PC-3 (cell line): ENCODE measurements at regions of chr20 and their contacts with region 1.

Region 1: GRCh38 chr20:48945851-48946514 is 24.5 kb downstream of the ARFGEF2 start:
- DNase-seq: peak; percentile 99
- ATAC-seq: peak; percentile 98
- H3K4me3 ChIP-seq: peak overlapping the region; percentile 58
- H3K27ac ChIP-seq: peak overlapping the region; percentile 87
- H3K4me1 ChIP-seq: peaks cover 20% of the 10 kb centered on the region
- H3K27me3 ChIP-seq: no peaks in the 10 kb centered on the region
- CTCF ChIP-seq: no peak

Region 2: DNA sequence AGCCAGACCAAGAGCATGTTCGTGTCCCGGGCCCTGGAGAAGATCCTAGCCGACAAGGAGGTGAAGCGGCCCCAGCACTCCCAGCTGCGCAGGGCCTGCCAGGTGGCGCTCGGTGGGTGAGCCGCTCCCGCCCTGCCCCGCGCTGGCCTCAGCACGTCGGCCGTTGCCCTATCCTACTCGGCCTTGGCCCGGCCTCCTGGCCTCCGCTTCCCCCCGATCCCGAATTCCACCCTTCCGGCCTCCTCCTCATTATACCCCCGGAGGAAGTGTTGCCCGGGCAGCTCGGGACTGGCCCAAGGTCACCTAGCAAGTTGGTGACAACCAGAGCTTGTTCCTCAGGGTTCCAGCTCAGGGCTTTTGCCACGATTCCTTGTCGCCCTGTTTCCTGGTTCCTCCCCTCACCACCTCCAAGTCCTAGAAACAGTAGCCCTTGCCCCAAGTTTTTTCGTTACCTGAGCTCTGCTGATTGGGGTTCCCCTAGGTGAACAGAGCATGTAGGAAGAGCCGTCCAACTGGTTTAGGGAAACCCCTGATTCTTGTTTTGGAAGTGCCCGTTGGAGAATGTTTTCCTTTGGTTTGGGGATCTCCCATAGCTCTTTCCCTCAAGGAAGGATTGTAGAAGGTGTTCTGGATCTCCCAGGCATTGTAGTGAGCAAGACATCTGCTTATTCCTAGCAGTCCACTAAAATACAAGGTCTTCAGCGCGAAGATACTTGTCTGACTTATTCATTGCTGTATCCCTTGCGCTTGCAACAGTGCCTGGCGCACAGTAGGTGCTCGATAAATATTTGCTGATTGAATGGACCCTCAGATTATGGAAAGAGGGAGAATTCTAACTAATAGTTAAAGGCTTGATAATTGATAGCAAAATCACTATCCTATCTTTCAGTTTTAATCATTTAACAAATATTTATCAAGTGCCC is 23.8 kb before region 1 on chr20:
- CTCF ChIA-PET with region 1: no interaction called
- POLR2A ChIA-PET with region 1: no interaction called
- intact Hi-C with region 1: loop called (anchors 2 kb)
- DNase-seq: peak; percentile 49
- ATAC-seq: peak; percentile 73
- H3K4me3 ChIP-seq: peak overlapping the region; percentile 89
- H3K27ac ChIP-seq: peak overlapping the region; percentile 73
- H3K4me1 ChIP-seq: peaks cover 24% of the 10 kb centered on the region
- H3K27me3 ChIP-seq: no peaks in the 10 kb centered on the region
- CTCF ChIP-seq: no peak

Region 3: GRCh38 chr20:48986899-48987298 is 40.9 kb after region 1 on chr20:
- CTCF ChIA-PET with region 1: no interaction called
- POLR2A ChIA-PET with region 1: no interaction called
- intact Hi-C with region 1: no loop called
- DNase-seq: peak; percentile 49
- ATAC-seq: no peak
- H3K4me3 ChIP-seq: no peak overlapping the region
- H3K27ac ChIP-seq: no peak overlapping the region
- H3K4me1 ChIP-seq: peaks cover 22% of the 10 kb centered on the region
- H3K27me3 ChIP-seq: no peaks in the 10 kb centered on the region
- CTCF ChIP-seq: peak; percentile 79